ENCODE measurements at regions of chr3 and their contacts with region 1.

Region 1: GRCh38 chr3:36957862-36958686 is 13.2 kb upstream of the TRANK1 start:
- DNase-seq: no peak
- ATAC-seq: no peak
- H3K4me3 ChIP-seq: no peak overlapping the region
- H3K4me3 Mint-ChIP-seq: no peak overlapping the region
- H3K27ac ChIP-seq: no peak overlapping the region
- H3K27ac Mint-ChIP-seq: peak overlapping the region; percentile 51
- H3K4me1 ChIP-seq: peaks cover 0 to 4% of the 10 kb centered on the region in 2 donors
- H3K4me1 Mint-ChIP-seq: peaks cover 13% of the 10 kb centered on the region
- H3K27me3 ChIP-seq: no peaks in the 10 kb centered on the region
- H3K27me3 Mint-ChIP-seq: no peaks in the 10 kb centered on the region
- CTCF ChIP-seq: no peak

Region 2: DNA sequence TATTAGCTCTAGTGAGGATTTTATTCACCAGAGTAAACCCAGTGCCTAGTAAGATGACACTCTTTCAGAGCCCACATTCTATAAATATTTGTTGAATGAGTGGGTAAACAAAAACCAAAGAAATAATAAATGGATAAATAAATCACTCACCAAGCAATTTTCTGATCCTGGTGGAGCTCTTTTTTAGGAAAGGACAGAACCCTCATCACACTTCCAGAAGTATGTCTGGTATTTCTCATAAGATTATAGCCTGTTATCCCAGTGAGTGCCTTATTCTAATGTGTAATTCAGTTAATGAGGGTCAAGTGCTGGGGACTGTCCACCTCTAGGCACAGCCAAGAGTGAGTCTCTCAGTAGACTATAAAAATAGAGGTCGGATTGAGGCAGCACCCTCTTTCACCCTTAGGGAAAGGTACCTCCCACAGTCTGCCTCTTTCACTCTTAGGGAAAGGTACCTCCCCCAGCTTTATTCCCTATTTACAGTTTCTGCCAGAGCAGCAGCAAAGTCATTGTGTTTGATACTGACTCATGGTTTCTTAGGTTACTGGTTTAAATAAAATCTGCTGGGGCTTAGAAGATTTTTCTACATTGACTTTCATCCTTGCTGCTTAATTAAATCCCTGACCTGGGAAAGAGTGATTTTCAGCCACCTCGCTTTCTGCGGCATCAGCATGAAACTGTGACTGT is 432.8 kb before region 1 on chr3:
- CTCF ChIA-PET with region 1: no interaction called
- POLR2A ChIA-PET with region 1: no interaction called
- intact Hi-C with region 1: no loop called
- DNase-seq: no peak
- ATAC-seq: no peak
- H3K4me3 ChIP-seq: no peak overlapping the region
- H3K4me3 Mint-ChIP-seq: no peak overlapping the region
- H3K27ac ChIP-seq: no peak overlapping the region
- H3K27ac Mint-ChIP-seq: no peak overlapping the region
- H3K4me1 ChIP-seq: no peaks in the 10 kb centered on the region
- H3K4me1 Mint-ChIP-seq: no peaks in the 10 kb centered on the region
- H3K27me3 ChIP-seq: peaks cover 0 to 3% (median 0%) of the 10 kb centered on the region in 4 experiments
- H3K27me3 Mint-ChIP-seq: no peaks in the 10 kb centered on the region
- CTCF ChIP-seq: no peak

Region 3: DNA sequence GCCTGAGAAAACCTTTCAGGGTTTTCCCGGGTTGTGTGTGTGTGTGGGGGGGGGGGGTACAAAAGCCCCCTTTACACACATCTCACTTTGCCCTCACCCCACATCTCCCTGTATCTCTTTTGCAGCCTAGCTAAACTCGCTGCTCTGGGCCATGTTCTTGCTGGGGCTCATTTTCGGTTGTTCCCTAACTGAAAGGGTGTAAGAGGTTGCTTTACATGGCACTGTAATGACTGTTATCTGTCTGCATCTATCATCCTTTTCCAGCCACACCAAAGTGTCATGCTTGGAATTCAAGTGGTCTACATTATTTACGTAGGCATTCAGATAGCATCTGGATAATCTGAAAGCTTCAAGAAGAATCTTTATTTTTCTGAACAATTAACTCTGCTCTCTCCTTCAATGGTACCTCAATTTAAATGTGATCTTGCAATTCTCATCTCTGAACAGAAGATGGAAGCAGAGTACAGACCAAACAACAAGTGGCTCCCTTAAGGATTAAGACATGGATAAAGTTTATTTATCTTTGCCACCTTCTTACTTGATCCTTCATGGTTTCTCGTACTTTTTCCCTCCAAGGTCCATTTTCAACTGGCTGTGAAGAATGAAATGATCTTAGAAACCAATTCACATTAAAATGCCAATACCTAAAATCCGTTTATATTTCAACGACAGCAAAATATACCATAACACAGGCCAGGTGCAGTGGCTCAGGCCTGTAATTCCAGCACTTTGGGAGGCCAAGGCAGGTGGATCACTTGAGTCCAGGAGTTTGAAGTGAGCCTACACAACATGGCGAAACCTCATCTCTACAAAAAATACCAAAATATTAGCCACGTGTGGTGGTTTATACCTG is 228.6 kb before region 1 on chr3:
- CTCF ChIA-PET with region 1: interaction called, 13 read pairs
- POLR2A ChIA-PET with region 1: no interaction called
- intact Hi-C with region 1: no loop called
- DNase-seq: peak; percentile 51
- ATAC-seq: peak; percentile 45
- H3K4me3 ChIP-seq: no peak overlapping the region
- H3K4me3 Mint-ChIP-seq: no peak overlapping the region
- H3K27ac ChIP-seq: no peak overlapping the region
- H3K27ac Mint-ChIP-seq: no peak overlapping the region
- H3K4me1 ChIP-seq: no peaks in the 10 kb centered on the region
- H3K4me1 Mint-ChIP-seq: no peaks in the 10 kb centered on the region
- H3K27me3 ChIP-seq: peaks cover 0 to 3% (median 0%) of the 10 kb centered on the region in 4 experiments
- H3K27me3 Mint-ChIP-seq: peaks cover 20% of the 10 kb centered on the region
- CTCF ChIP-seq: peak; percentile 75

Region 4: DNA sequence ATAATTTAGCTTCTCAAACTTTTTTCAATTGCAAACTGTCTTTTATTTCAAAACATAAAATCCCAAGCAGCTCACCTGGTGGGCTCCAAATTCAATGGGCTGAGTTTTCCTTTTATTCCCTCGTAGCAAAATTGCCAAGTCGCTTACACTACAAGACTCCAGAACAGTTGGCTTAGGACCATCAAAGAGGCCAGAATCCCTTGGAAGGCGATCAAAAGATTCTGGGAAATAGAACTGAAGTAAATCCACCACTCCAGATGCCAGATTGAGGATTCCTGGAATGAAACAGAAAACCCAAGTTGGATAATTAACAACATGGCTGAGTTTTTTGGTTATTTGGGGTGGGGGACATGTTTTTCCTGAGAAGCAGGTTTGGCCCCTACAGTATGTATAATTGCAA is 106.0 kb before region 1 on chr3:
- CTCF ChIA-PET with region 1: interaction called, 14 read pairs
- POLR2A ChIA-PET with region 1: no interaction called
- intact Hi-C with region 1: no loop called
- DNase-seq: no peak
- ATAC-seq: no peak
- H3K4me3 ChIP-seq: no peak overlapping the region
- H3K4me3 Mint-ChIP-seq: no peak overlapping the region
- H3K27ac ChIP-seq: no peak overlapping the region
- H3K27ac Mint-ChIP-seq: no peak overlapping the region
- H3K4me1 ChIP-seq: no peaks in the 10 kb centered on the region
- H3K4me1 Mint-ChIP-seq: peaks cover 3% of the 10 kb centered on the region
- H3K27me3 ChIP-seq: no peaks in the 10 kb centered on the region
- H3K27me3 Mint-ChIP-seq: no peaks in the 10 kb centered on the region
- CTCF ChIP-seq: no peak

Region 5: DNA sequence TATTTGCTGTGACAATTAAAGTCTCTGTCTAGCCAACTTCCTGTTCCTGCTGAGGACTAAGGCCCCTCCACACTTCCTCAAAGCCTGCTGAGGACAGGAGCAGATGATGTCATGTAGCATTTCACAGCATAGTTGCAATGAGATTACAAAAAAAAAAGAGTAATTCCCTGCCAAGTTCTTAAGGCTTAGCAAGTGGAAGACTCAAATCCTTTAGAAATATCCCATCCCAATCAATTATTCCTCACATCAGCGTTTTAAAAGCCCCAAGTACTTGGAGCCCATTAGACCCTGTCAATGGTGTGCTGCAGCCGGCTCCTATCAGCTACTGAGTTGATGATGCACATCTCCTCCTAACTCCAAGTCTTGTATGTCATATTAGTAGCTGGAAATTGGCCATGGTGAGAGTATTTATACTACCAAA is 64.9 kb before region 1 on chr3:
- CTCF ChIA-PET with region 1: interaction called, 43 read pairs
- POLR2A ChIA-PET with region 1: interaction called, 4 read pairs
- intact Hi-C with region 1: loop called (anchors 1 kb)
- DNase-seq: peak; percentile 83
- ATAC-seq: peak; percentile 50
- H3K4me3 ChIP-seq: peak overlapping the region in 1 of 5 experiments; percentile 4
- H3K4me3 Mint-ChIP-seq: peak overlapping the region; percentile 70
- H3K27ac ChIP-seq: peak overlapping the region; percentile 84 to 97
- H3K27ac Mint-ChIP-seq: peak overlapping the region; percentile 97
- H3K4me1 ChIP-seq: peaks cover 78% of the 10 kb centered on the region in 2 donors
- H3K4me1 Mint-ChIP-seq: peaks cover 84% of the 10 kb centered on the region
- H3K27me3 ChIP-seq: no peaks in the 10 kb centered on the region
- H3K27me3 Mint-ChIP-seq: no peaks in the 10 kb centered on the region
- CTCF ChIP-seq: no peak

Region 6: DNA sequence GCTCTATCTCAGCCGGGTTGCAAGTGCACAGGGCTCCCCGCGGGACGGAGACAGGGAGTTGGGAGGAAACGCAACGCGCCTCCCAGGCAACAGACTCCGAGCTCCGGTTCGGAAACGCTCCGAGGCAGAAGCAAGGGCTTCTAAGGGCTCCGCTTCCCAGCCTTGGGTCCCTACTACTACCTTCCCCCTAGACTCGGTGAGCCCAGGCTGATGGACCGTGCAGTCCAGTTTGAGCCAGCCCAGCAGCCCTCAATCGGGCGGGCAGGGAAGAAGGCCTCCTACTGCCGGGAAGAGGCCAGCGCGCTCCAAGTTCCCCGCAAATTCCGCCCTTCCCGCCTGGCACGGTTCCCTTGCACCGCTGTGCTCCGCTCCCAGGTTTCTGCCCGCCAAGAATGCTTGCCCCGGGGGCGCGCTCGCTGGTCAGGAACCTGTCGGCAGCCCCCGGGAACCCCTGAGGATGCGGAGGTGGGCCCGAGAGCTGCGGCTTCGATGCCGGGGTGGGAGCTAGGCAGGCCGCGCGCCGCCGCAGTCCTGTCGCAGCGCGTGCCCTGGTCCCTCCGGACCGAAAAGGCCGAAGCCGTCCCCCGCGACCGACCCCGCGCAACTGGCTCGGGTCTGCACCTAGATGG is 13.9 kb before region 1 on chr3:
- CTCF ChIA-PET with region 1: interaction called, 42 read pairs
- POLR2A ChIA-PET with region 1: interaction called, 3 read pairs
- intact Hi-C with region 1: loop called (anchors 1 kb)
- DNase-seq: no peak
- ATAC-seq: peak; percentile 39
- H3K4me3 ChIP-seq: peak overlapping the region; percentile 22 to 79 (median 76)
- H3K4me3 Mint-ChIP-seq: peak overlapping the region; percentile 90
- H3K27ac ChIP-seq: peak overlapping the region in 1 of 2 donors; percentile 76
- H3K27ac Mint-ChIP-seq: peak overlapping the region; percentile 78
- H3K4me1 ChIP-seq: peaks cover 6 to 14% of the 10 kb centered on the region in 2 donors
- H3K4me1 Mint-ChIP-seq: peaks cover 16% of the 10 kb centered on the region
- H3K27me3 ChIP-seq: no peaks in the 10 kb centered on the region
- H3K27me3 Mint-ChIP-seq: no peaks in the 10 kb centered on the region
- CTCF ChIP-seq: no peak

Region 7: DNA sequence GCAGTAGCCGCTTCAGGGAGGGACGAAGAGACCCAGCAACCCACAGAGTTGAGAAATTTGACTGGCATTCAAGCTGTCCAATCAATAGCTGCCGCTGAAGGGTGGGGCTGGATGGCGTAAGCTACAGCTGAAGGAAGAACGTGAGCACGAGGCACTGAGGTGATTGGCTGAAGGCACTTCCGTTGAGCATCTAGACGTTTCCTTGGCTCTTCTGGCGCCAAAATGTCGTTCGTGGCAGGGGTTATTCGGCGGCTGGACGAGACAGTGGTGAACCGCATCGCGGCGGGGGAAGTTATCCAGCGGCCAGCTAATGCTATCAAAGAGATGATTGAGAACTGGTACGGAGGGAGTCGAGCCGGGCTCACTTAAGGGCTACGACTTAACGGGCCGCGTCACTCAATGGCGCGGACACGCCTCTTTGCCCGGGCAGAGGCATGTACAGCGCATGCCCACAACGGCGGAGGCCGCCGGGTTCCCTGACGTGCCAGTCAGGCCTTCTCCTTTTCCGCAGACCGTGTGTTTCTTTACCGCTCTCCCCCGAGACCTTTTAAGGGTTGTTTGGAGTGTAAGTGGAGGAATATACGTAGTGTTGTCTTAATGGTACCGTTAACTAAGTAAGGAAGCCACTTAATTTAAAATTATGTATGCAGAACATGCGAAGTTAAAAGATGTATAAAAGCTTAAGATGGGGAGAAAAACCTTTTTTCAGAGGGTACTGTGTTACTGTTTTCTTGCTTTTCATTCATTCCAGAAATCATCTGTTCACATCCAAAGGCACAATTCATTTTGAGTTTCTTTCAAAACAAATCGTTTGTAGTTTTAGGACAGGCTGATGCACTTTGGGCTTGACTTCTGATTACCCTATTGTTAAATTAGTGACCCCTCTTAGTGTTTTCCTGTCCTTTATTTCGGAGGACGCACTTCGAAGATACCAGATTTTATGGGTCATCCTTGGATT is 35.5 kb after region 1 on chr3 and contains the start of gene MLH1:
- CTCF ChIA-PET with region 1: interaction called, 25 read pairs
- POLR2A ChIA-PET with region 1: no interaction called
- intact Hi-C with region 1: loop called (anchors 5 kb)
- DNase-seq: peak; percentile 100
- ATAC-seq: peak; percentile 85
- H3K4me3 ChIP-seq: peak within 1 kb of the TSS; percentile 72 to 86 (median 76)
- H3K4me3 Mint-ChIP-seq: no peak within 1 kb of the TSS
- H3K27ac ChIP-seq: peak within 1 kb of the TSS; percentile 97 to 98
- H3K27ac Mint-ChIP-seq: no peak within 1 kb of the TSS
- H3K4me1 ChIP-seq: peaks cover 39 to 46% of the 10 kb centered on the region in 2 donors
- H3K4me1 Mint-ChIP-seq: peaks cover 38% of the 10 kb centered on the region
- H3K27me3 ChIP-seq: no peaks in the 10 kb centered on the region
- H3K27me3 Mint-ChIP-seq: no peaks in the 10 kb centered on the region
- CTCF ChIP-seq: no peak
- total RNA-seq, gene MLH1: 38.5 and 46.3 TPM in 2 replicates